GM12878 (cell line): ENCODE measurements at regions of chrX and their contacts with region 1.

Region 1: DNA sequence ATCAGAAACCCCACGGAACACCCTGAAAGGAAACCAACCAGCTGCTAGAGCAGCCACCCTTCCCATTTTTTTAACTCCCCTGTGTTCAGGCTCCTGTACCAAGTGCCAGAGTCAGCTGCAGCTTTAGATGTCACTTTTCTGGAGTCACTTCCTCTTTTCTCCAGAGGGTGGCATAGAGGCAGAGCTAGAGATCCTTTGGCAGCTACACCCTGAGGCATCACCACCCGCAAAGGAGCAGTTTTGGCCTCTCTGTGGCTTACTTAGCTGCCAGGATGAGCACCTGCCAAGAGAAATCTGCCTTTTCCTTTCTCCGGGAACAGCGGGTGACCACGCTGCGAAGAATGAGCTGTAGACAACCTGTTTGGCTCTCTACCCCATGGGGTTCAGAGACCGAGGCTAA is 58.0 kb upstream of the CHRDL1 start:
- DNase-seq: no peak
- ATAC-seq: peak; percentile 67
- H3K4me3 ChIP-seq: no peak overlapping the region
- H3K27ac ChIP-seq: no peak overlapping the region
- H3K4me1 ChIP-seq: no peaks in the 10 kb centered on the region; the same call in 1 of the 2 replicates
- H3K27me3 ChIP-seq: no peaks in the 10 kb centered on the region
- CTCF ChIP-seq: 0 out of 6 replicates have a peak, but pooled peaks of 1 of the 3 experiments have one; percentile 8
- EP300 ChIP-seq: no peak
- POLR2A ChIP-seq: no peak
- RAD21 ChIP-seq: no peak

Region 2: GRCh38 chrX:110241816-110242215 is 611.8 kb before region 1 on chrX:
- CTCF ChIA-PET with region 1: no interaction called
- POLR2A ChIA-PET with region 1: no interaction called
- RAD21 ChIA-PET with region 1: no interaction called
- SMC1A ChIA-PET with region 1: no interaction called
- in situ Hi-C with region 1: no loop called
- intact Hi-C with region 1: no loop called
- DNase-seq: no peak
- ATAC-seq: no peak
- H3K4me3 ChIP-seq: no peak overlapping the region
- H3K27ac ChIP-seq: no peak overlapping the region
- H3K4me1 ChIP-seq: no peaks in the 10 kb centered on the region
- H3K27me3 ChIP-seq: no peaks in the 10 kb centered on the region
- CTCF ChIP-seq: no peak
- EP300 ChIP-seq: no peak
- POLR2A ChIP-seq: no peak
- RAD21 ChIP-seq: no peak

Region 3: GRCh38 chrX:110442640-110443039 is 411.0 kb before region 1 on chrX:
- CTCF ChIA-PET with region 1: interaction called, 73 read pairs
- POLR2A ChIA-PET with region 1: no interaction called
- RAD21 ChIA-PET with region 1: interaction called, 5 read pairs
- SMC1A ChIA-PET with region 1: interaction called, 3 read pairs
- in situ Hi-C with region 1: no loop called
- intact Hi-C with region 1: no loop called
- DNase-seq: no peak
- ATAC-seq: peak; percentile 93
- H3K4me3 ChIP-seq: no peak overlapping the region
- H3K27ac ChIP-seq: no peak overlapping the region
- H3K4me1 ChIP-seq: no peaks in the 10 kb centered on the region; the same call in 1 of the 2 replicates
- H3K27me3 ChIP-seq: peaks cover 0 to 4% of the 10 kb centered on the region in 2 experiments; a peak in 1 of 4 replicates
- CTCF ChIP-seq: peak; percentile 32 to 42 (median 32); a peak in 5 of 6 replicates
- EP300 ChIP-seq: no peak
- POLR2A ChIP-seq: no peak
- RAD21 ChIP-seq: no peak

Region 4: DNA sequence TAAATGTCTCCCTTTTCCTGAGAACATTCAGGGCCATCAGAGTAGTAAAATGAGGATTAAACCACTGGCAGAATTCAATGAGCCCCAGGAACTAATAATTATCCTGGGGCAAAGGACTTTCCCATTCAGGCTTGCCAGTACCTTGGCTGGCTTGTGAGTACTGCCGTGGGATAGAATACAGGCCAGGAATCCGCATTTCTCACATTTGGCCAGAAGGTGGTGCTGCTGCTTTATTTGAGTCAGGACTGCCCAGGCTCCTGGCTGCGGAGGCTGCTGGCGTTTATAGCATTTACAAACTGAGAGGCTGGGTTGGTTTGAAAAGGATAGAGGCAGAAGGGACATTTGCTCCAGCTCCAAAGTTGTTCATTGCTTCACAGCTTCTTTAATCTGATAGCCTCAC is 403.6 kb before region 1 on chrX:
- CTCF ChIA-PET with region 1: interaction called, 73 read pairs
- POLR2A ChIA-PET with region 1: no interaction called
- RAD21 ChIA-PET with region 1: interaction called, 5 read pairs
- SMC1A ChIA-PET with region 1: interaction called, 14 read pairs
- in situ Hi-C with region 1: loop called (anchors 5 kb)
- intact Hi-C with region 1: loop called (anchors 1 kb)
- DNase-seq: peak; percentile 20
- ATAC-seq: peak; percentile 99
- H3K4me3 ChIP-seq: no peak overlapping the region
- H3K27ac ChIP-seq: no peak overlapping the region
- H3K4me1 ChIP-seq: no peaks in the 10 kb centered on the region
- H3K27me3 ChIP-seq: peaks cover 0 to 4% of the 10 kb centered on the region in 2 experiments; a peak in 2 of 4 replicates
- CTCF ChIP-seq: peak; percentile 78 to 85 (median 84)
- EP300 ChIP-seq: no peak
- POLR2A ChIP-seq: no peak
- RAD21 ChIP-seq: peak; percentile 89

Region 5: DNA sequence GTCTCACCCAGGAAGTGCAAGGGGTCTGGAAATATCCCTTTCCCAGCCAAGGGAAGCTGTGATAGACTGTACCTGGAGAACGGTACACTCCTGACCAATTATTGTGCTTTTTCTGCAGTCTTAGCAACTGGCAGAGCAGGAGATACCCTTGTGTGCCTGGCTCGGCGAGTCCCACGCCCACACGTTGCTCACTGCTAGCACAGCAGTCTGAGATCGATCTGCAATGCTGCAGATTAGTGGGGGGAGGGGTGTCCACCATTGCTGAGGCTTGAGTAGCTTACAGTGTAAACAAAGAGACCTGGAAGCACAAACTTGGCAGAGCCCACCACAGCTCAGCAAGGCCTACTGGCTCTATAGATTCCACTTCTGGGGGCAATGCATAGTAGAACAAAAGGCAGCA is 196.5 kb before region 1 on chrX:
- CTCF ChIA-PET with region 1: no interaction called
- POLR2A ChIA-PET with region 1: no interaction called
- RAD21 ChIA-PET with region 1: no interaction called
- SMC1A ChIA-PET with region 1: no interaction called
- in situ Hi-C with region 1: no loop called
- intact Hi-C with region 1: no loop called
- DNase-seq: no peak
- ATAC-seq: no peak
- H3K4me3 ChIP-seq: no peak overlapping the region
- H3K27ac ChIP-seq: no peak overlapping the region
- H3K4me1 ChIP-seq: no peaks in the 10 kb centered on the region
- H3K27me3 ChIP-seq: no peaks in the 10 kb centered on the region
- CTCF ChIP-seq: no peak
- EP300 ChIP-seq: no peak
- POLR2A ChIP-seq: no peak
- RAD21 ChIP-seq: no peak

Region 6: DNA sequence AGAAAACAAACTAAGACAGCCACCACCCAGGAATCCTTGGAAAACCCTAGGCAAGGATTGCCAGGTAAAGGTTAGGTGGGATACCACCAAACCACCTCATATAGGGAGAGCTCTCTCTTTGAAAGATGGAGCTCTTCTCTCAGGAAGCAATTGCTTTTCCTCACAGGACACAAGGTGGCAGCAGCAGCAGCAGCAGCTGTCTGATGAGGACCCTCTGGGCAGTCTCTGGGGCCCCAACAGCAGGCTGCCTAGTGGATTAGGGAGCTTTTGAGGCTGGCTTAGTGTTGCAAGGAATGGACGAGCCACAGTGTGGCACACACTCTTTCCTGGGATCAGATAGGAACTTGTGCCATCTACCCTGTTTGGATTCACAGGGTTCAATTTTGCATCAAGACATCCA is 16.6 kb before region 1 on chrX:
- CTCF ChIA-PET with region 1: interaction called, 34 read pairs
- POLR2A ChIA-PET with region 1: no interaction called
- RAD21 ChIA-PET with region 1: no interaction called
- SMC1A ChIA-PET with region 1: interaction called, 3 read pairs
- in situ Hi-C with region 1: no loop called
- intact Hi-C with region 1: loop called (anchors 2 kb)
- DNase-seq: no peak
- ATAC-seq: 0 out of 3 replicates have a peak, but pooled peaks have one; percentile 41
- H3K4me3 ChIP-seq: no peak overlapping the region
- H3K27ac ChIP-seq: no peak overlapping the region
- H3K4me1 ChIP-seq: no peaks in the 10 kb centered on the region
- H3K27me3 ChIP-seq: no peaks in the 10 kb centered on the region
- CTCF ChIP-seq: 0 out of 6 replicates have a peak, but pooled peaks of 2 of the 3 experiments have one; percentile 14 to 15
- EP300 ChIP-seq: no peak
- POLR2A ChIP-seq: no peak
- RAD21 ChIP-seq: no peak